ENCODE measurements at regions of chr17 and their contacts with region 1.

Region 1: DNA sequence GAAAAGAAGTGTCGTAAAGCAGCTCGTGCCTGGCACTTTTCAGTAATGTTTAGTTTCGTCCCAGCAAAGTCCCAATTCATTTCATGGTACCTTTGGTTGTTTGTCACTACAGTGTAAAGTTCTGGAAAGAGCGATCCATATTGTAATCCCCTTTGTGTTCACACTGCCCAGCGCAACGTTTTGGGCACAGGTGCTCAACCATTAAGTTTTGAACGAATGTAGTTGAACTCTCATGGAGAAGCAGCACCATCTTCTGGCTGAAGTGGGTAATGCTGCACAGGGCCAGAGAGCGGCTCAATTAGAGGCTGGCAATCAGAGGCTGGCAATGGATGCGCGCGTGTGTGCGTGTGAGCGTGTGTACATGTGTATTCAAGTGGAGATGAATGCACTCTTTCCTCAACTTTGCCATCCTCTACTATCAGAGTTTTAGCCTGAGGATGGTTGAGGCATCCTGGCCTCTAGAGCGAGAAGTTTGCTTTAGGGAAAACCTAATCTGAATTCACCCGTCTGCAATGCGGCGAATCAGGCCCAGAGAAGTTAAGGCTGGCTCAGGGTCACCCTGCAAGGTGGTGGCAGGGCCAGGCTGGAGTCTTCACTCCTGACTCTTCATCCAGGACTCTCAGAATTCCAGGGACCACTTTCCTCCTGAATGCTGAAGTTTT is 29.9 kb downstream of the DYNLL2 start:
- DNase-seq: peak; percentile 79
- ATAC-seq: peak; percentile 78 to 87

Region 2: DNA sequence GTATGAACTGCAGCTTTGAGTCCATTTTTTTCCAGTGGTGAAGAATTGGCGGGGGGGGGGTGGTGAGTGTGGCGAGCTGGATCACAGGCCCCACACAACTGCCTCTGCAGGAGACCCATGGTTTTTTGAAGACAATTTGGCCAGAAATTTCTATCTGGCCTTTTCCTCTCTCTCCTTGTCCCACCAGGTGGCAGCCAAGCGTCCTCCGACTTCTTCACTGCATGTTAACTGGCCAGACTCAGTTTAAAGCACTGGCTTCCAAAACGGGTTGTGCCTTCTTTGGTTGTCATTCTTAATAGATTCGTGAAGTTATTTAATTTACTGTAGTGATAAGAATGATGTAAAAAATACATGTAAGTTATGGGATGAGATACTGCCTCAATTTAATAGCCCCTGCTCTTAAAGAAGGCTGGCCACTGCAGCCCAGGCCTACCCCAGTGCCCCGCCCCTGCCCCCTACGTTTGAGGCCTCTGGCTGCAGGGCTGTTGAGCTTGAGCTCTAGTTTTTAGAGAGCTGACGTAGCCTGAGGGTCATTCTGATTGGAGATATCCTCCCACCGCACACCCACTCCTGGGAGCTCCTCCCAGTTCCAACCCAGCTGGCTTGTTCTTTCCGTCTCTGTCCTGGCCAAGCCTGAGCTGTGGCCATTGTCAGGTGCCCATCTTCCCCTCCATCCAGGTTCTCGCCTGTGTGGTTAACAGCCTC is 991.6 kb before region 1 on chr17:
- intact Hi-C with region 1: loop called in 1 of 2 experiments (anchors 10 kb)
- DNase-seq: no peak
- ATAC-seq: peak; percentile 21 to 36

Region 3: DNA sequence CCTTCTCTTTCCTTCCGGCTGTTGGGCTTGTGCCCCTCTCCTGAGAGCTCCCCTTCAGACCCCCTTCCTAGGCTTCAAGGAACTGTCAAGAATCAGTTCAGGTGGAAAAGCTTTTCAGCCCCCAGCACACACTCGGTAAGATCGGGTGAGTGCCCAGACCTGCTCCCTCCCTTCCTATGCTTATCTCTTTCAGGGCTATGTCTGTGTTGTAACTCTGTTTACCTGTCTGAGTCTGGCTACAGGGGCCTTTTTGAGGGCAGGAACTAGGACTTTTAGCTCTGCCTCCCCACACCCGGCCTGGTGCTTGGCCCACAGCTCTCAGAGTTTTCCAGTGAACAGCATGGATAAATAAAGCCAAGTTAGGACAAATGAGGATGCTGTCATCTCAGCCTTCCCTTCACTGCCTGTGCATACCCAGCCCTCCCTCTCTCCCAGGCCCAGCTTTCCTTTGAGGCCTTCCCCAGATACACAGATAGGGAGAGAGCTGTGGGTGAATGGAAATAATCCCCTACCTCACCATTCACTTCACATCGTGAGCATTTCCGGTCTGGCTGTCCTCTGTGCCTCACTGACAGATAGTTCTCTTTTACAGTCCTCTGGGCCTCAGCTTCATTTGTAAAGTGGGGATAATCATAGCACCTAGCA is 257.6 kb before region 1 on chr17:
- intact Hi-C with region 1: loop called in 1 of 2 experiments (anchors 5 kb)
- DNase-seq: no peak
- ATAC-seq: no peak

Region 4: DNA sequence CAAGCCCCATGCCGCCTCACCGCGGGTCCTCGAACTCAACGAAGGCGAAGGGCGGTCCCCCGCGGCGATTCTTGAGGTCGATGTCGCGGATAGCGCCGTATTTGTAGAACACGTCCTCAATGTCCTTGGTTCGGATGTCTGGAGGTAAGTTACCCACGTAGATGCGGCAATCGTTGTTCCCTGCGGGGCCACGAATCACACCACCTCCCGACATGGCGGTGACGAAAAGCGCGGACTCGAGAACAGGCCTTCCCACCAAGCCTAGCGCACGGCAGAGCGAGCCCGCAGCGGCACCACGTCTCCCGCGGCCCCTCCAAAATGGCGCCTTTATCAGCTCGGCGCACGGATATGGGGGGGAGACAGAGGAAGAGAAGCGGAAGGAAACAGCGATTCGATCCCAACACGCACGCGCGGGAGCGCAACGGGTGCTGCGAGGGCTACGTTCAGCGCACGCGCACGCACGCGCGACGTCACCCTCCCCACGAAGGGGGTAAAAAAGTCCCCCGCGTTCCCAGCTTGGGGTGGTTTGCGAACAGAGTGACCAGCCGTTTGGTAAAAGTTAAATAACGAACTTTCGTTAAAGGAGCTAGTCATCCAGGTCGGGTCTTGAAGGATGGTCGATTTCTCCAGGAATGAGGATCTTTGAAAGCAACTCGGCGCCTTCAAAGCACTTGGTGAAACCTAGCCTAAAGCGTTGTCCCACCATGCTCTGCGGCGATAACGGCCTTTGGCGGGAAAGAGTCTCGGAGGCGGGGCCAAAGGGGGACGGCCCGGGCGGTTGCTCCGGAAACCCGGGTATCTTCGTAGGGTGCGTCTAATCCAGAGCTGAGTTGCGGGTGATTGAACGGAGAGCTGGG is 105.9 kb before region 1 on chr17 and contains the start of gene SRSF1:
- intact Hi-C with region 1: loop called (anchors 5 to 10 kb)
- DNase-seq: peak; percentile 98
- ATAC-seq: peak; percentile 96
- total RNA-seq, gene SRSF1: 113 to 137 TPM

Region 5: GRCh38 chr17:58249270-58250133 is 136.4 kb after region 1 on chr17:
- intact Hi-C with region 1: no loop called
- DNase-seq: peak; percentile 65
- ATAC-seq: peak; percentile 91 to 95

Measured in left cardiac atrium (tissue), 4 donors.